ENCODE measurements at regions of chr4 and their contacts with region 1.

Region 1: GRCh38 chr4:173494013-173494970 is 35.7 kb downstream of the HAND2 start:
- DNase-seq: peak; percentile 71
- H3K4me3 ChIP-seq: peak overlapping the region in 3 of 4 donors; percentile 20 to 49 (median 31)
- H3K27ac ChIP-seq: no peak overlapping the region
- H3K4me1 ChIP-seq: peaks cover 0 to 24% (median 5%) of the 10 kb centered on the region in 4 donors
- H3K27me3 ChIP-seq: peaks cover 22% of the 10 kb centered on the region
- CTCF ChIP-seq: peak; percentile 70 to 78 (median 76)
- EP300 ChIP-seq: no peak
- POLR2A ChIP-seq: no peak

Region 2: DNA sequence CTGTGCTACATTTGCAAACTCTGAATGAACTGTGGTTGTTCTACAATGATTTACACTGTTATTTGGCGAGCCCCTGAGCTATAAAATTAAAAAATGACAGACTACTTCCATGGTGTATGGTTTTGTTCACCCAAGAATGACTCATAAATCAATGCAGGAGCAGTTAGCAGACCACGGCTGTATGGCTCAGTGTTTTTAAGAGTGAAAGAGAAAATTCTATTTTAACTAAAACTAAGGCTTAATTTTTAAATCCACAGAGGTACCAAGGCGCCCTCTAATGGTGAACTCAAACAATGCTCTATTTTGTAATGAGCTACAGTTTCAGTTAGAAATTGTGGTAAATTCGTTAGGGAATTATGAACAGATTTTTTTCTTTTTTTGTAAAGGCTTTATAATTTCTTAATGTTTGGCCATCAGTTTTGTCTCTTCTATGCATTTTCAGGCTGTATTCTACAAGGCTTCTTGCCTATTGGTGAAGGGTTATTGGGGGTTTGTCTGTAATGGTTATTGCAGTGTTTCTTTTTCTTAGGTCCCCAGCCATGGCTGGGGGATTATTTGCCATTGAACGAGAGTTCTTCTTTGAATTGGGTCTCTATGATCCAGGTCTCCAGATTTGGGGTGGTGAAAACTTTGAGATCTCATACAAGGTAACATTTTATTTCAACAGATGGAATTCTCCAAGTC is 192.6 kb before region 1 on chr4:
- in situ Hi-C with region 1: no loop called
- intact Hi-C with region 1: no loop called
- DNase-seq: no peak
- H3K4me3 ChIP-seq: no peak overlapping the region
- H3K27ac ChIP-seq: no peak overlapping the region
- H3K4me1 ChIP-seq: peaks cover 0 to 10% (median 1%) of the 10 kb centered on the region in 4 donors
- H3K27me3 ChIP-seq: no peaks in the 10 kb centered on the region
- CTCF ChIP-seq: peak; percentile 65 to 79 (median 68)
- EP300 ChIP-seq: no peak
- POLR2A ChIP-seq: no peak

Region 3: DNA sequence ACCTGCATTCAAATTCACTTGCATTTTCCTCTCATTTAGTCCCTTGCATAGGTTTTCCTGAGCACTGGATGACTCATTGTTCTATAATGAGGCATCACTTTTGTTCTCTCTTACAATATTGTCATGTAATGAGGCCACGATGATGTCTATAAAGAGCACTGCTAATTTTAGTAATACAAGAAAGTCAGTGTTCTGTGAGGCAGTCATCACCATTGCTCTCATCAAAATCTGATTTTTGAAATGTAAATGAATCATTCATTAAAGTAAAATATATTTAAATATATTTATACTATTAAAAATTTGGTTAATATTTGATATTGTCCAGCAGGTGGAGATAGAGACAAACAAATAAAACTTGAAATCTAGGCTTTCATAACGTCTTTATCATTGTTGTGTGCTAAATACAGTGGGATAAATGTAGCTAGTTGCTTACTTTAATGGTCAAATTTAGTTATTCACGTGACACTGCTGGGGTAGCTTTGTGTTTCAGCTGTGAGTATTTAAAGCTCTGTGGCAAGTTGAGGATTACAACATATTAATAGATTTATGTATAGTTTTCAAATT is 175.6 kb before region 1 on chr4:
- in situ Hi-C with region 1: loop called in 1 of 4 experiments (anchors 10 kb)
- intact Hi-C with region 1: no loop called
- DNase-seq: no peak
- H3K4me3 ChIP-seq: no peak overlapping the region
- H3K27ac ChIP-seq: no peak overlapping the region
- H3K4me1 ChIP-seq: no peaks in the 10 kb centered on the region
- H3K27me3 ChIP-seq: no peaks in the 10 kb centered on the region
- CTCF ChIP-seq: peak in 4 of 5 experiments; percentile 35 to 49 (median 41)
- EP300 ChIP-seq: no peak
- POLR2A ChIP-seq: no peak

Measured in transverse colon (tissue), 4 donors.